MCF 10A (cell line): ENCODE measurements at regions of chr11 and their contacts with region 1.

Region 1: GRCh38 chr11:112163875-112164685 is at the start of gene IL18:
- DNase-seq: peak; percentile 88
- H3K4me3 Mint-ChIP-seq: peak within 1 kb of the TSS; percentile 96
- H3K27ac Mint-ChIP-seq: peak within 1 kb of the TSS; percentile 97
- H3K4me1 Mint-ChIP-seq: peaks cover 53% of the 10 kb centered on the region
- H3K27me3 Mint-ChIP-seq: no peaks in the 10 kb centered on the region
- CTCF ChIP-seq: no peak
- total RNA-seq, gene IL18: 124 and 189 TPM in 2 replicates

Region 2: DNA sequence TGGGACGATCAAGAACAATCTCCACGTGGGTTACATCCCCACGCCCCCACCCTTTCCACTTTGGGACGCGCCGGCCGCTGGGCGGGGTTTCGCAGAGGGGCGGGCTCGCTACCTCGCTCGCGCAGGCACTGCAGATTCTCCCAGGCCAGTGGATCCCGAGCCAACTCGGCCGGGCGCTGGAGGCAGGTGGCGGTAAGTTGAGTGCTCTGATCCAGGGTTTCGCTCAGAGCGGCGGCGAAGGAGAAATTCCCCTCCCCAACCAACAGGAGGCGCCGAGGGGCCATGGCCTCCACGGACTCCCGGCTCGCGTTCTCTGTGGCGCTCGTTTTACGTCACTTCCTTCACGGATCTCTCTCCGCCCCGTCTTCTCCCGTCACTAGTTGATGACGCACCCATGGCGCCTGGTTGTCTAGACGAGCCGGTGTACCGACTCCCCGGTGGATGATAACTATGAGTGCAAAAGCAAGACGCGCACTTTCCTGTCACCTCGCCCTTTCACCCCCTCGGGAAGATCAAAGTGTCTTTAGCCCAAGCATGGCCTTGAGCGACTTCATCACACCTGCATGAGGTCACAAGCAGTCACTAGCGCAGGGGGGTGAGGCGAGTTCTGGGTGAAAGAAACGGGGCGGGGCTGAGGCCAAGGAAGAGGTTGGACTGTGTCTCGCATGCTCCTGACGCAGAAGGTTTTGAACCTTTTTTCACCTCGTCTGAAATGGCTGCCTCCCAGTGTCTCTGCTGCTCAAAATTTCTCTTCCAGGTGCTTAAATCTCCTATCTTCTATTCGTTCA is 285.0 kb before region 1 on chr11 and contains the starts of genes CFAP68 and FDXACB1:
- CTCF ChIA-PET with region 1: no interaction called
- POLR2A ChIA-PET with region 1: no interaction called
- intact Hi-C with region 1: loop called (anchors 10 kb)
- DNase-seq: peak; percentile 98
- H3K4me3 Mint-ChIP-seq: peak within 1 kb of the TSS; percentile 95
- H3K27ac Mint-ChIP-seq: peak within 1 kb of the TSS; percentile 97
- H3K4me1 Mint-ChIP-seq: peaks cover 6% of the 10 kb centered on the region
- H3K27me3 Mint-ChIP-seq: no peaks in the 10 kb centered on the region
- CTCF ChIP-seq: peak; percentile 94
- total RNA-seq, gene CFAP68: 33.6 and 38.3 TPM in 2 replicates
- total RNA-seq, gene FDXACB1: 0.79 and 1.0 TPM in 2 replicates

Region 3: GRCh38 chr11:112113539-112114457 is 50.3 kb before region 1 on chr11:
- CTCF ChIA-PET with region 1: interaction called, 8 read pairs
- POLR2A ChIA-PET with region 1: interaction called, 73 read pairs
- intact Hi-C with region 1: no loop called
- DNase-seq: peak; percentile 75
- H3K4me3 Mint-ChIP-seq: no peak overlapping the region
- H3K27ac Mint-ChIP-seq: no peak overlapping the region
- H3K4me1 Mint-ChIP-seq: no peaks in the 10 kb centered on the region
- H3K27me3 Mint-ChIP-seq: no peaks in the 10 kb centered on the region
- CTCF ChIP-seq: peak; percentile 73

Region 4: DNA sequence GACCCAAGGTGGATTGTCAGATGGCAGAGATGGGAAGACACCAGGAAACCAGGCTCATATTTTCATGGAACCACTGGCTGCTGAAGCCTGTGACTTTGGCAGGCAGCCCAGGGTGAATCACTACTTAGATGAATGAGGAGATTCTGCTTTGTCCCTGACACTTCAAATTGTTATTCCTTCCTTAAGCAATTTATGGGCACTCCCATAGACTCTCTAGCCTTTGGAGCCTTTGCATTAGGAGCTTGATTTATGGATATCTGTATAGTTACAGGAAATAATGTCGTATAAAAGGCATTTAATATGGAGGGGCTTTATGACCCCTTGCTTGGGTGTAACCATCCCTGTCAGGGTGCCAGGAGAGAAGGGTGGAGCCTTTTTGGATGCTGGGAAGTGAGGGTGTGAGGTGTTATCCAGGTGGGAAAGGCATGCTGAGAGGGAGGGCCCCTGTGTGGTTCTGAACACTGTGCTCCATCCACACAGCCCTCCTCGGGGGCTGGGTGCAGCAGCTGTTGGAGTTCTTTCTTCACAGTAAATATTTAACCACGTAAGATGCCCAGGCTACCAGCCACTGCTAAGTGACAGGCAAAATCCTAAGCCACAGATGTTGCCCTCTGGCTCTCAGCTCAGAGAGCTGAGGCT is 35.5 kb before region 1 on chr11:
- CTCF ChIA-PET with region 1: interaction called, 3 read pairs
- POLR2A ChIA-PET with region 1: interaction called, 73 read pairs
- intact Hi-C with region 1: no loop called
- DNase-seq: peak; percentile 85
- H3K4me3 Mint-ChIP-seq: peak overlapping the region; percentile 13
- H3K27ac Mint-ChIP-seq: peak overlapping the region; percentile 57
- H3K4me1 Mint-ChIP-seq: peaks cover 32% of the 10 kb centered on the region
- H3K27me3 Mint-ChIP-seq: no peaks in the 10 kb centered on the region
- CTCF ChIP-seq: no peak

Region 5: DNA sequence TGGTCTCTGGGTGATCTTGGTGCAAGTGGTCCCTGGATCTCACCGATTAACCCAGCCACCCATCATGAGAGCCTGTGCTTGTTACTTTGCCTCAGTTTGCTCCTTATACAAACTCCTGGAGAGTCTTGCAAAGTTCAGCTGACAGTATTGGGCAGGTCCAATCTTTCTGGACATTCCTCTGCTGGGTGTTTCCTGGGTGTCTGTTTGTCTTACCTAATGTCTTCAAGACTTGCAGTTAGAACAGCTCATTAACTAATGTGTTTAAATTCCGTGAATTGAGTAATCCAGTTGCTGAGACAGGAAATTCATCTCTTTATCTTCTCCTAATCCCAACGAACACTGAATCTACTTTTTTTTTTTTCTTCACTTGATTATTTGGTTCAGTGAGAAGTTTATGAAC is 31.8 kb after region 1 on chr11:
- CTCF ChIA-PET with region 1: interaction called, 4 read pairs
- POLR2A ChIA-PET with region 1: interaction called, 68 read pairs
- intact Hi-C with region 1: no loop called
- DNase-seq: peak; percentile 80
- H3K4me3 Mint-ChIP-seq: peak overlapping the region; percentile 69
- H3K27ac Mint-ChIP-seq: peak overlapping the region; percentile 90
- H3K4me1 Mint-ChIP-seq: peaks cover 16% of the 10 kb centered on the region
- H3K27me3 Mint-ChIP-seq: no peaks in the 10 kb centered on the region
- CTCF ChIP-seq: no peak

Region 6: GRCh38 chr11:112206071-112206470 is 42.0 kb after region 1 on chr11:
- CTCF ChIA-PET with region 1: no interaction called
- POLR2A ChIA-PET with region 1: no interaction called
- intact Hi-C with region 1: no loop called
- DNase-seq: no peak
- H3K4me3 Mint-ChIP-seq: no peak overlapping the region
- H3K27ac Mint-ChIP-seq: no peak overlapping the region
- H3K4me1 Mint-ChIP-seq: no peaks in the 10 kb centered on the region
- H3K27me3 Mint-ChIP-seq: no peaks in the 10 kb centered on the region
- CTCF ChIP-seq: no peak

Region 7: DNA sequence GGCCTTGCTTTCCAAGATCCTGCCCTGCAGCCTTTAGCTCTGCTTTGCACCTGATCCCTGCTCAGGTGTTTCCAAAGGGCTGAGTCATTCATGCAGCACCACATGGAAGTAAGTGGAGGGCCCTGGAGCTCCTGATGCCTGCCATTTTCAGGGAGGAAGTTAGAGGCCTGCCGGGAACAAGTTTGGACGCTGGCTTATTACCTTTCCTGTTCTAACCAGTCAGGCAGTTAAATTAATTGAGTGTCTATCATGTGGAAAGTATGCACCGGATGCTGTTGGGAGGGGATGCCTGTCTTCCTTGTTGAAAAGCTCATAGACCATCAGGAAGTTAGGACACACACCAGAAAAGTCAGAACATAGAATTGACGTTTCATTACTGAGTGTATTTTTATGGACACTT is 170.3 kb after region 1 on chr11:
- CTCF ChIA-PET with region 1: no interaction called
- POLR2A ChIA-PET with region 1: no interaction called
- intact Hi-C with region 1: no loop called
- DNase-seq: peak; percentile 75
- H3K4me3 Mint-ChIP-seq: no peak overlapping the region
- H3K27ac Mint-ChIP-seq: no peak overlapping the region
- H3K4me1 Mint-ChIP-seq: no peaks in the 10 kb centered on the region
- H3K27me3 Mint-ChIP-seq: peaks cover 62% of the 10 kb centered on the region
- CTCF ChIP-seq: no peak

Region 8: DNA sequence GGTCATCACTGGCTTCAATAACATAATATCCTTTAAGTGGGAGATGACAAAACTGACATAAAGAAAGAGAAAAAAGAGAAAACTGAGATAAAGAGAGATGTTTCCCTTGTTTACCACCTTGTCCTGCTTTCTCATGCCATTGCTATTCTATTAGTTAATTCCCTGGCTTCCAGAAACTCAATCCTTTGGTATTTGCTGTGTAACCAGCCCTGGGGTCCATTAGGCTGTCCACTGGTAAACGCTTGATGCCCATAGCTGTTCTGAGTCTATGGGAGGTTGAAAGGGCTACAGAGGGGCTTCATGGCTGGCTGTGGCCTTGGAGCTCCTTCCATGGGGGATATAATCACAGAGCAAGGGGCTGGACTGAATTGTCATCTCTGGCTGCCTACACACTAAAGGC is 340.0 kb after region 1 on chr11:
- CTCF ChIA-PET with region 1: no interaction called
- POLR2A ChIA-PET with region 1: no interaction called
- intact Hi-C with region 1: no loop called
- DNase-seq: no peak
- H3K4me3 Mint-ChIP-seq: no peak overlapping the region
- H3K27ac Mint-ChIP-seq: no peak overlapping the region
- H3K4me1 Mint-ChIP-seq: no peaks in the 10 kb centered on the region
- H3K27me3 Mint-ChIP-seq: peaks cover 24% of the 10 kb centered on the region
- CTCF ChIP-seq: no peak